ENCODE measurements at regions of chr5 and their contacts with region 1.

Region 1: DNA sequence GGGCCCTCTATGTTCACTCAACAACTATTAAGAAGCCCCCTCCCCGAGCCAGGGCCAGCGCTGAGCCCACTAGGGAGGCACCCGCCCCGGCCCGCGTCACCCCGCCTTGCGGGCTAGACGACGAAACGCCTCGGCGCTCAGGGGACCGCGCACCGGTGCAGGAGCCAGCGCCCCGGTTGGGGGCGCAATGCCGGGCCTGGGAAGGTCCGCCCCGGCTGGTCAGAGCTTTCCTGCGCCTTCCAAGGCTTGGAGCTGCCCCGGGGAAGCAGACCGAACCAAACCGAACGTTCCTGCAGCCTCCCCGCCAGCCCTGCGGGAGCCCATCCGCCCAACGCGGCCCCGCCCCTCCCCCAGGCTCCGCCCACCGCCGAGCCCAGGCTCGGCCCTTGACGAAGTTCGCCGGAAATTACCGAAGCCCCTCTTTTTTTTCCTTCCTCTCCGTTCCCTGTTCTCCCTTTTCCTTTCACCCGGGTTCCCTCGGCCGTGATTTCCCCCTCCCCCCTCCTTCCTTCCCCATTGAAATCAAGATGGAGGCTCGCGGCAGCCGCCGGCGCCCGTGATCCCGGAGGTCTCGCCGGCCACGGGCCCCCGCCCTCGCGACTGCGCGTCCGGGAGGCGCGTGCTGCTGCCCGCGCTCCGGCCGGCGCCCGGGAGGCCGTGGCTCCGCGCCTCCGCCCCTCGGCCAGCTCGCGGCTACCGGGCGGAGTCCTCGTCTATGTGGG is at the start of gene TRIO:
- DNase-seq: peak; percentile 78
- H3K4me3 ChIP-seq: peak within 1 kb of the TSS; percentile 94
- H3K27ac ChIP-seq: peak within 1 kb of the TSS; percentile 68
- H3K4me1 ChIP-seq: peaks cover 16% of the 10 kb centered on the region
- CTCF ChIP-seq: peak; percentile 68
- total RNA-seq, gene TRIO: 29.3 and 35.8 TPM in 2 replicates

Region 2: GRCh38 chr5:14156650-14157493 is 13.9 kb after region 1 on chr5:
- CTCF ChIA-PET with region 1: no interaction called
- POLR2A ChIA-PET with region 1: interaction called, 25 read pairs
- intact Hi-C with region 1: no loop called
- DNase-seq: peak; percentile 40
- H3K4me3 ChIP-seq: peak overlapping the region; percentile 35
- H3K27ac ChIP-seq: peak overlapping the region; percentile 35
- H3K4me1 ChIP-seq: peaks cover 60% of the 10 kb centered on the region
- CTCF ChIP-seq: no peak

Region 3: GRCh38 chr5:14174230-14174637 is 31.2 kb after region 1 on chr5:
- CTCF ChIA-PET with region 1: no interaction called
- POLR2A ChIA-PET with region 1: no interaction called
- intact Hi-C with region 1: loop called (anchors 2 kb)
- DNase-seq: peak; percentile 25
- H3K4me3 ChIP-seq: peak overlapping the region; percentile 38
- H3K27ac ChIP-seq: peak overlapping the region; percentile 19
- H3K4me1 ChIP-seq: peaks cover 48% of the 10 kb centered on the region
- CTCF ChIP-seq: no peak

Region 4: DNA sequence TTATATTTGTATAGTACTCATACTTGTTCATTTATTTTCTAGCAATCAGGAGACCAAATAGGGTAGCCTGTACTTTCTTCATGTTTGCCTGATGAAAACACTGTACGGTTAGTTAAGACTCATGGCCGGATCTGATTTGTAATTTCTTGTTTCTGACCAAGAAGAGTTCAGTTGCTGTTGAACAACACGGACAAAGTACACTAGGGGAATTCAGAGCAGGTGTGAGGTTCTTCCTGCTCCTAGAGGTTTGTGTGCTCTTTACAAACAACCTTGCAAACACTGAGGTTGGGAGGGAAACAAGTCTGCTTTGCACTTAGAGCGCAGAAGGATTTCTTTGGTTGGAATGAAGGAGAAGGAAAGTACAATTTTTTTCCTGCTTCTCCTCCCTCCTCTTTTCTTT is 69.8 kb after region 1 on chr5:
- CTCF ChIA-PET with region 1: no interaction called
- POLR2A ChIA-PET with region 1: interaction called, 5 read pairs
- intact Hi-C with region 1: loop called (anchors 1 kb)
- DNase-seq: peak; percentile 78
- H3K4me3 ChIP-seq: peak overlapping the region; percentile 55
- H3K27ac ChIP-seq: peak overlapping the region; percentile 97
- H3K4me1 ChIP-seq: peaks cover 97% of the 10 kb centered on the region
- CTCF ChIP-seq: no peak

Region 5: DNA sequence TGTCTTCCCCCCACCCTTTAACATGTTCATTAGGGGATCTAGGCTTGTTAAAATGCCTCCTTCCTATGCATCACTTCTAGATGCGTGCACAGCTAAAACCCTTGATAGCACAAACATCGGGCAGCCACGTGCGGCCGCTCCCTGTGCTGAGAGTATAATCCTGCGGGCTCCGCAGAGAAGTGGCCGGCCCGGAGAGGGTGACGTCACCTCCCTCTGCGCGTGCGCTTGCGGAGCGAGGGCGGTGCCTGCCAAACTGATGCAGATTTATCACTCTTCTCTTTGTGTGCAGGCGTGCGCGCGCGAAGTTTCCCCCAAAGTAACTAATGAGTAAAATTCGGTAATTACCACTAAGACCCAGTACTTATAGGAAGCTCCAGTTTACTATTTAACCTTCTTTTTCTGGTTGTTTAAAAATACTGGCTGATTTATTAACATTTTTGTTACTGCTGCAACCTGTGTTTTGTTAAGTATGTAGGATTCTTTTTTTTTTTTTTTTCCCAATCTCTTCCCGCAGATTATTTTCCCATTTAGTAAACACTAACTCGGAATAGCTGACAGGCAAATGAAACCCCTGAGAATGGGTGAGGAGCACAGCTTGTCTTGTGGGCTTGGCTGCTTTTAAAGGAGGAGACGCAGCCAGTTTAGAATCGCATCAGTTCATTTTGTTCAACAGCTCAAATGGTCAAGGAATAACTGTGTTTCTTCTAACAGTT is 121.8 kb after region 1 on chr5:
- CTCF ChIA-PET with region 1: no interaction called
- POLR2A ChIA-PET with region 1: interaction called, 5 read pairs
- intact Hi-C with region 1: loop called (anchors 2 kb)
- DNase-seq: peak; percentile 80
- H3K4me3 ChIP-seq: peak overlapping the region; percentile 45
- H3K27ac ChIP-seq: peak overlapping the region; percentile 15
- H3K4me1 ChIP-seq: peaks cover 49% of the 10 kb centered on the region
- CTCF ChIP-seq: no peak

Region 6: DNA sequence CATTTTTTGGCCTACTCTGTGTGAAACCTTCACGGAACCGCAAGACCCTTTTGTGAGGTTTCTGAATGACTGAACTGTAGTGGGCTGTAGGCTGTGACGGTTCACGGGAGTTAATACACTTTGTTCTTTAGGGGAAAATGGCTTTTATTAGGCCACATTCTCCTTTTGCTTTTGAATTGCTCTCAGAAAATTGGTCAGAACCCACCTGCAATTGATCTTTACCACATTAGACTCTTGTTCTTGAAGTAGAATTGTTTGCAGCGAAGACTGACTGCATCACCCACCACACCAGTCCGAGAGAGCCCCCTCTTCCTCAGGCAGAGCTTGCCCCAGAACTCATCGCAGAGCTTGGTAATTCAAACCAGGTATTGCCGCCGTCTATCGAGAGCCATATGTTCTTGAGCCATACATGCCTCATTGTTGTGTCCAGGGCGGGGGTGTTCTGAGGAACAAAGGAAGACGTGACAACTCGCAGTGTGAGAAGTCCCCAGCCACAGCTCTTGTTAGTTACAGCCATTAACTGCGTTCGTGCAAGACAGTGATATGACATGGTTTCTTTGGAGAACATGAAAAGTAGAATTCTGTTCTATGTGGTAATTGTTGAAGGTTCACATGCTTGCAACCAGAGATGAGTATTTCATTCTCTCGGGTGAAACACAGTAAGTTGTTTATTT is 272.2 kb after region 1 on chr5:
- CTCF ChIA-PET with region 1: no interaction called
- POLR2A ChIA-PET with region 1: no interaction called
- intact Hi-C with region 1: no loop called
- DNase-seq: no peak
- H3K4me3 ChIP-seq: no peak overlapping the region
- H3K27ac ChIP-seq: no peak overlapping the region
- H3K4me1 ChIP-seq: no peaks in the 10 kb centered on the region
- CTCF ChIP-seq: no peak